ENCODE measurements at regions of chr6 and their contacts with region 1.

Region 1: GRCh38 chr6:87393022-87393622 is 14.7 kb upstream of the CFAP206 start:
- DNase-seq: peak in 11 of 14 experiments; percentile 4 to 81 (median 16)
- ATAC-seq: peak; percentile 97
- H3K4me3 ChIP-seq: no peak overlapping the region
- H3K4me3 Mint-ChIP-seq: no peak overlapping the region
- H3K27ac ChIP-seq: no peak overlapping the region
- H3K27ac Mint-ChIP-seq: no peak overlapping the region
- H3K4me1 ChIP-seq: no peaks in the 10 kb centered on the region
- H3K4me1 Mint-ChIP-seq: no peaks in the 10 kb centered on the region
- H3K27me3 ChIP-seq: no peaks in the 10 kb centered on the region
- H3K27me3 Mint-ChIP-seq: no peaks in the 10 kb centered on the region
- CTCF ChIP-seq: peak; percentile 81

Region 2: GRCh38 chr6:87139236-87139635 is 253.9 kb before region 1 on chr6:
- CTCF ChIA-PET with region 1: no interaction called
- POLR2A ChIA-PET with region 1: no interaction called
- intact Hi-C with region 1: loop called in 1 of 2 experiments (anchors 5 kb)
- DNase-seq: peak in 8 of 14 experiments; percentile 16 to 82 (median 54)
- ATAC-seq: peak; percentile 85
- H3K4me3 ChIP-seq: no peak overlapping the region
- H3K4me3 Mint-ChIP-seq: no peak overlapping the region
- H3K27ac ChIP-seq: no peak overlapping the region
- H3K27ac Mint-ChIP-seq: no peak overlapping the region
- H3K4me1 ChIP-seq: no peaks in the 10 kb centered on the region
- H3K4me1 Mint-ChIP-seq: peaks cover 5% of the 10 kb centered on the region
- H3K27me3 ChIP-seq: no peaks in the 10 kb centered on the region
- H3K27me3 Mint-ChIP-seq: peaks cover 13% of the 10 kb centered on the region
- CTCF ChIP-seq: peak; percentile 83

Region 3: DNA sequence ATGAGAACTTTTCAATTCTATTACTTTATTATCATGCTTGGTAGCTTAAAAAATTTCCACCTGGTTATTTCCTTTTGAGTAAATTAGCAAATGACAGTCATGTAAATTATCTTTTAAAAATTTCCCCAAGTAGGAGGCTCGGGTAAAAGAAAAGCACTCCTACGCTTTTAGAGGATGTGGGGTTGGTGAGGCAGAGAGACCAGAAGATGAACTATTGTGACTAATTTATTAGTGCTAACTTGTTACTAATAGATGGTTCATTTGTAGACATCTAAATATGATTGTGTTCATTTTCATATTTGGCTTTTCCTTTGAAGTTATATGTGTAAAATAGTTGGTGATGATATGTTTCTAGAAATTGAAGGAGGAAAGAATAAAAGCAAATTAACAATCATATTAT is 210.8 kb before region 1 on chr6:
- CTCF ChIA-PET with region 1: no interaction called
- POLR2A ChIA-PET with region 1: no interaction called
- intact Hi-C with region 1: no loop called
- DNase-seq: peak in 1 of 14 experiments; percentile 12
- ATAC-seq: no peak
- H3K4me3 ChIP-seq: no peak overlapping the region
- H3K4me3 Mint-ChIP-seq: no peak overlapping the region
- H3K27ac ChIP-seq: no peak overlapping the region
- H3K27ac Mint-ChIP-seq: no peak overlapping the region
- H3K4me1 ChIP-seq: peaks cover 22% of the 10 kb centered on the region
- H3K4me1 Mint-ChIP-seq: peaks cover 80% of the 10 kb centered on the region
- H3K27me3 ChIP-seq: no peaks in the 10 kb centered on the region
- H3K27me3 Mint-ChIP-seq: no peaks in the 10 kb centered on the region
- CTCF ChIP-seq: no peak

Region 4: DNA sequence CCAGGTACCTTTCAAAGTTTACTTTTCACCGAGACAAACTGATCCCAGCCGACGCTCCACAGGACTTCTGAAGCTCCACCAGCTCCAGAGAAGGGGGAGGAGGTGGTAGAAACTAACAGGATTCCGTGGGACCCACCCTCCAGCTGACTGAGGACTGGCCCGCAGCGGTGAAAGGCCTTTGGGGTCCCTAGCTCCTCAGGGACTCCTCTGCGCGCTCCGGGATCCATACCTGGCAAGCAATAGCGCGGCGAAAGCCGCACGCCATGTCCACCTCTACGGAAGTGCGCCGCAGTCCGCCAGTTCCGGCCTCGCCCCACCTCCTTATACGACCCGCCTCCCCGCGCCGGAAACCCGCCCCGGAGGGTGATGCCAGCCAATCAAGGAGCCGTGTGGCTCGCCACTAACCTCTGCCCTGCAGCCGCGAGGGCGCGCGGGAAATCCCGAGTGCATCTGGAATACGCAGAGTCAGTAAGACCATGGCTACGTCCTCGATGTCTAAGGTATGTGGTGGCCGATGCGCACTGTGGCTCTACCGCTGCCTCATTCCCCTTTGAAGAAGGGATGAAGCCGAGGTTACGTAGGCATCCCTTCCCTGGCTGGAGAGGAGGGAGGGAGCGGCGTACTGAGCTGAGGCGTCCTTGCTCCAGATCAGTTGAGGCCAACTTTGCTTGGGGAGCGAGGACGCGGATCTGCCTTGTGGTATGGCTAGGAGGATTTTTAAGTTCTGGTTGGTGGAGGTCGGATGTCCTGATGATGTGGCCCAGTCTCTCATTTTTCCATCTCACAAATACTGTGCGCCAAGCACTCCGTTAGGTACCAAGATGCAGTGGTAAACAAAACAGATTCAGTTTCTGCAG is 196.8 kb after region 1 on chr6 and contains the starts of genes ORC3 and RARS2:
- CTCF ChIA-PET with region 1: interaction called, 3 read pairs
- POLR2A ChIA-PET with region 1: no interaction called
- intact Hi-C with region 1: loop called in 1 of 2 experiments (anchors 10 kb)
- DNase-seq: peak; percentile 88 to 96 (median 92)
- ATAC-seq: peak; percentile 98
- H3K4me3 ChIP-seq: peak within 1 kb of the TSS; percentile 68
- H3K4me3 Mint-ChIP-seq: peak within 1 kb of the TSS; percentile 89
- H3K27ac ChIP-seq: peak within 1 kb of the TSS; percentile 76 to 80
- H3K27ac Mint-ChIP-seq: peak within 1 kb of the TSS; percentile 87
- H3K4me1 ChIP-seq: peaks cover 37% of the 10 kb centered on the region
- H3K4me1 Mint-ChIP-seq: peaks cover 74% of the 10 kb centered on the region
- H3K27me3 ChIP-seq: no peaks in the 10 kb centered on the region
- H3K27me3 Mint-ChIP-seq: no peaks in the 10 kb centered on the region
- CTCF ChIP-seq: no peak
- total RNA-seq, gene ORC3: 12.1 to 12.9 TPM
- total RNA-seq, gene RARS2: 21.9 to 22.4 TPM

Region 5: GRCh38 chr6:87799651-87800050 is 406.5 kb after region 1 on chr6:
- CTCF ChIA-PET with region 1: no interaction called
- POLR2A ChIA-PET with region 1: no interaction called
- intact Hi-C with region 1: loop called in 1 of 2 experiments (anchors 10 kb)
- DNase-seq: no peak
- ATAC-seq: no peak
- H3K4me3 ChIP-seq: no peak overlapping the region
- H3K4me3 Mint-ChIP-seq: no peak overlapping the region
- H3K27ac ChIP-seq: no peak overlapping the region
- H3K27ac Mint-ChIP-seq: no peak overlapping the region
- H3K4me1 ChIP-seq: no peaks in the 10 kb centered on the region
- H3K4me1 Mint-ChIP-seq: no peaks in the 10 kb centered on the region
- H3K27me3 ChIP-seq: no peaks in the 10 kb centered on the region
- H3K27me3 Mint-ChIP-seq: peaks cover 5% of the 10 kb centered on the region
- CTCF ChIP-seq: no peak

Region 6: GRCh38 chr6:88238065-88238464 is 844.9 kb after region 1 on chr6:
- CTCF ChIA-PET with region 1: no interaction called
- POLR2A ChIA-PET with region 1: no interaction called
- intact Hi-C with region 1: loop called in 1 of 2 experiments (anchors 5 kb)
- DNase-seq: peak in 3 of 14 experiments; percentile 20 to 39 (median 20)
- ATAC-seq: no peak
- H3K4me3 ChIP-seq: no peak overlapping the region
- H3K4me3 Mint-ChIP-seq: no peak overlapping the region
- H3K27ac ChIP-seq: no peak overlapping the region
- H3K27ac Mint-ChIP-seq: no peak overlapping the region
- H3K4me1 ChIP-seq: no peaks in the 10 kb centered on the region
- H3K4me1 Mint-ChIP-seq: no peaks in the 10 kb centered on the region
- H3K27me3 ChIP-seq: no peaks in the 10 kb centered on the region
- H3K27me3 Mint-ChIP-seq: no peaks in the 10 kb centered on the region
- CTCF ChIP-seq: no peak

Region 7: DNA sequence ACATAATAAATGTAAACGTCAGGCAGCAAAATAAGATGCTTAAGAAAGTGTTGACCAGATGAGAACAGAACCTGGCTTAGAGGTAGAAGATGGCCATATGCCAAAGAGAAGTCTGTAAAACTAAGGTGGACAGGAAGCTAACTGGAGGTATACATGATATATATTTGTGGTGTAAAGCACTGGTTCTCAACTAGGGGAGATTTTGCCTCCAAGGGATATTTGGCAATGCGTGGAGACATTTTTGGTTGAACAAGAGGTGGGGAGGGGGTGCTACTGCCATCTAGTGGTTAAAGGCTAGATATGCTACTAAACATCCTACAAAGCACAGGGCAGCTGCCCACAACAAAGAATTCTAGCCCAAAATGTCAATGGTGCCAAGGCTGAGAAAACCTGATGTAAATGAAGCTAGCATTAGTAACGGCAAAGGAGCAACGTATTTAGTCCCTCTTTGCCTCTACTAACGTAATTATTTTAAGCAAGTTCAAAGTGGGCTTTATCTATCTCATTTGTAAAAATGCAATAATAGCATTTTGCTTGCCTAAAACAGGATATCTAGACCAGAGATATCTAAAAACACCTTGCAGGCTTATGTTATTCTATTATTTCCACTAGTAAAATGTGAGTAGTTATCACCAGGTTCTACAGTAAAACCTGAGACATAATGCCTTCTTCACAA is 1387.7 kb after region 1 on chr6:
- CTCF ChIA-PET with region 1: interaction called, 3 read pairs
- POLR2A ChIA-PET with region 1: no interaction called
- intact Hi-C with region 1: loop called (anchors 2 to 5 kb)
- DNase-seq: peak in 13 of 14 experiments; percentile 2 to 77 (median 22)
- ATAC-seq: peak; percentile 80
- H3K4me3 ChIP-seq: no peak overlapping the region
- H3K4me3 Mint-ChIP-seq: no peak overlapping the region
- H3K27ac ChIP-seq: no peak overlapping the region
- H3K27ac Mint-ChIP-seq: no peak overlapping the region
- H3K4me1 ChIP-seq: no peaks in the 10 kb centered on the region
- H3K4me1 Mint-ChIP-seq: peaks cover 4% of the 10 kb centered on the region
- H3K27me3 ChIP-seq: no peaks in the 10 kb centered on the region
- H3K27me3 Mint-ChIP-seq: no peaks in the 10 kb centered on the region
- CTCF ChIP-seq: peak; percentile 90

Region 8: GRCh38 chr6:88870717-88871330 is 1477.7 kb after region 1 on chr6:
- CTCF ChIA-PET with region 1: interaction called, 6 read pairs
- POLR2A ChIA-PET with region 1: no interaction called
- intact Hi-C with region 1: loop called in 1 of 2 experiments (anchors 1 kb)
- DNase-seq: peak in 11 of 14 experiments; percentile 5 to 78 (median 25)
- ATAC-seq: no peak
- H3K4me3 ChIP-seq: no peak overlapping the region
- H3K4me3 Mint-ChIP-seq: no peak overlapping the region
- H3K27ac ChIP-seq: no peak overlapping the region
- H3K27ac Mint-ChIP-seq: no peak overlapping the region
- H3K4me1 ChIP-seq: no peaks in the 10 kb centered on the region
- H3K4me1 Mint-ChIP-seq: peaks cover 15% of the 10 kb centered on the region
- H3K27me3 ChIP-seq: no peaks in the 10 kb centered on the region
- H3K27me3 Mint-ChIP-seq: no peaks in the 10 kb centered on the region
- CTCF ChIP-seq: peak; percentile 78